Psoas muscle (tissue), 8 donors: ENCODE measurements at regions of chr3 and their contacts with region 1.

Region 1: GRCh38 chr3:19598870-19599269 is 335.1 kb downstream of the EFHB start:
- DNase-seq: no peak
- ATAC-seq: no peak
- H3K4me3 ChIP-seq: no peak overlapping the region
- H3K27ac ChIP-seq: no peak overlapping the region
- H3K4me1 ChIP-seq: no peaks in the 10 kb centered on the region
- H3K27me3 ChIP-seq: no peaks in the 10 kb centered on the region
- CTCF ChIP-seq: no peak

Region 2: GRCh38 chr3:19074257-19074900 is 524.5 kb before region 1 on chr3:
- intact Hi-C with region 1: no loop called
- DNase-seq: peak in 1 of 2 donors; percentile 19
- ATAC-seq: no peak
- H3K4me3 ChIP-seq: no peak overlapping the region
- H3K27ac ChIP-seq: no peak overlapping the region
- H3K4me1 ChIP-seq: no peaks in the 10 kb centered on the region
- H3K27me3 ChIP-seq: no peaks in the 10 kb centered on the region
- CTCF ChIP-seq: no peak

Region 3: DNA sequence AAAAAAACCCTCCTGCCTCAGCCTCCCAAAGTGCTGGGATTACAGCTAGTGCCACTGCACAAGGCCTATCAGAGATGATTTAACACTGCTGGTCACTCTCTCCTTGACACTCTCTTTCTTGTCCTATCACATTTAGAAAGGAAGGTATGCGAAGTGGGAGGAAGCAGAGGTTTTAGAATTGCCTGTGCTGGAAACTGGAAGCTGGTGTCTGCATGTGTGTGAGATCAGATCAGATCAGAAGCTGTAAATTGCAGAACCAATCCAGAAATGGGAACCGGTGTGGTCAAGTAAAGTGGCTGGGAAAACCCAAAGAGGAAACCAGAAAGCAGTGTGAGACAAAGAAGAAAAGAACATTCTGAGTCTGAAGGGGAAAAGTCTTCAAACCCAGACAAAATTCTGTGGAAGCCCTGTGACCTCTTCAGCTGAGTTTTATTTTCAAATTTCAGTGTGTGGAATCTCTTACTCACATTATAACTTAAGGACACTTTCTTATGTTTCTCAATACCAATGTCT is 332.4 kb after region 1 on chr3:
- intact Hi-C with region 1: loop called in 1 of 2 experiments (anchors 5 kb)
- DNase-seq: no peak
- ATAC-seq: no peak
- H3K4me3 ChIP-seq: no peak overlapping the region
- H3K27ac ChIP-seq: no peak overlapping the region
- H3K4me1 ChIP-seq: no peaks in the 10 kb centered on the region
- H3K27me3 ChIP-seq: no peaks in the 10 kb centered on the region
- CTCF ChIP-seq: no peak